ENCODE measurements at regions of chr12 and their contacts with region 1.

Region 1: GRCh38 chr12:30847259-30847658 is 79.3 kb upstream of the TSPAN11 start:
- DNase-seq: no peak
- ATAC-seq: peak in 1 of 4 donors; percentile 48
- H3K4me3 ChIP-seq: no peak overlapping the region
- H3K27ac ChIP-seq: no peak overlapping the region
- H3K4me1 ChIP-seq: no peaks in the 10 kb centered on the region
- H3K27me3 ChIP-seq: no peaks in the 10 kb centered on the region
- CTCF ChIP-seq: peak; percentile 66

Region 2: GRCh38 chr12:30985814-30986452 is 138.7 kb after region 1 on chr12:
- intact Hi-C with region 1: loop called (anchors 5 kb)
- DNase-seq: peak in 1 of 2 donors; percentile 35
- ATAC-seq: peak; percentile 67 to 70 (median 68)
- H3K4me3 ChIP-seq: no peak overlapping the region
- H3K27ac ChIP-seq: no peak overlapping the region
- H3K4me1 ChIP-seq: no peaks in the 10 kb centered on the region
- H3K27me3 ChIP-seq: no peaks in the 10 kb centered on the region
- CTCF ChIP-seq: peak; percentile 50

Region 3: DNA sequence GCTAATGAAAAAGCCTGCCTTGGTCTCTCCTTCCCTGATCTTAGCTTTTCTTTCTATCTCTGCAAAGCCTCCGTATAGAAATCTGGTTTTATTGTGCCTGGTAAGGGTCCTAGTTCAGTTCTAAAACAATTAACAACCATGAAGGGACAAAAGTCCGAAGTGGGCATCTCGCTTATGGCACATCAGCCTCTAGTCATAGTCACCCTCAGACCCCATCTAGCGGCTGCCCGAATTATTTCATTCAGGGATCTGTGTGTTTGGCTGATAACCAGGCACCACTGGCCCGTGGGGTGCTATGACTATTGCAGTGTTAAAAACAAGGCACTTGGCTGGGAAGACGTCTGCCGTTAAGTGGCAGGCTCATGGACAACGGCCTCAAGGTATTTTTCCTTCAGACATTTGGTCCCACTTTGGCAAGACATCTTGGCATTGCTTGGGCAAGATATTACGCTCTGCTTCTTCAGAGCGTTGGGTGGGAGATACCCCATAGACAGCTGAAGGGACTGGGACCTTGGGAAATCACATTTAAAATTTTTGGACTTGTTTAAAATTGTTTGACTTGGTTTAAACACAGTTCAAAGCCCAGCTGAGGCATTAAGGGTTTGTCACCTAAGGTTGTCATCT is 391.6 kb after region 1 on chr12:
- intact Hi-C with region 1: loop called in 1 of 2 experiments (anchors 2 kb)
- DNase-seq: peak; percentile 44 to 64
- ATAC-seq: peak; percentile 62 to 79 (median 71)
- H3K4me3 ChIP-seq: no peak overlapping the region
- H3K27ac ChIP-seq: no peak overlapping the region
- H3K4me1 ChIP-seq: no peaks in the 10 kb centered on the region
- H3K27me3 ChIP-seq: no peaks in the 10 kb centered on the region
- CTCF ChIP-seq: peak; percentile 63

Region 4: DNA sequence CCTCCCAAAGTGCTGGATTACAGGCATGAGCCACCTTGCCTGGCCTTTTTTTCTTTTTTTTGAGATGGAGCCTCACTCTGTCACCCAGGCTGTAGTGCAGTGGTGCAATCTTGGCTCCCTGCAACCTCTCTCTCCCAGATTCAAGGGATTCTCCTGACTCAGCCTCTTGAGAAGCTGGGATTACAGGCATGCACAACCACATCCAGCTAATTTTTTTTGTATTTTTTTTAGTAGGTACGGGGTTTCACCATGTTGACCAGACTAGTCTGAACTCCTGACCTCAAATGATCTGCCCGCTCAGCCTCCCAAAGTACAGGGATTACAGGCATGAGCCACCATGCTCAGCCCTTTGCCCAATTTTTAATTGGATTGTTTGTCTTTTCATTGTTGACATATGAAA is 420.7 kb after region 1 on chr12:
- intact Hi-C with region 1: loop called (anchors 2 to 5 kb)
- DNase-seq: no peak
- ATAC-seq: no peak
- H3K4me3 ChIP-seq: no peak overlapping the region
- H3K27ac ChIP-seq: no peak overlapping the region
- H3K4me1 ChIP-seq: no peaks in the 10 kb centered on the region
- H3K27me3 ChIP-seq: no peaks in the 10 kb centered on the region
- CTCF ChIP-seq: no peak

Region 5: GRCh38 chr12:31274520-31275300 is 427.5 kb after region 1 on chr12:
- intact Hi-C with region 1: loop called (anchors 2 to 5 kb)
- DNase-seq: no peak
- ATAC-seq: no peak
- H3K4me3 ChIP-seq: no peak overlapping the region
- H3K27ac ChIP-seq: no peak overlapping the region
- H3K4me1 ChIP-seq: no peaks in the 10 kb centered on the region
- H3K27me3 ChIP-seq: no peaks in the 10 kb centered on the region
- CTCF ChIP-seq: no peak